ENCODE measurements at regions of chr9 and their contacts with region 1.

Region 1: GRCh38 chr9:77433675-77434445 is 214.3 kb downstream of the GNA14 start:
- DNase-seq: peak; percentile 48
- ATAC-seq: peak; percentile 95
- H3K4me3 ChIP-seq: peak overlapping the region; percentile 3 to 52 (median 10); a peak in 3 of 6 replicates
- H3K27ac ChIP-seq: no peak overlapping the region
- H3K4me1 ChIP-seq: peaks cover 21% of the 10 kb centered on the region; the same call in 1 of the 2 replicates
- H3K27me3 ChIP-seq: peaks cover 2 to 14% of the 10 kb centered on the region in 2 experiments; a peak in 4 of 5 replicates
- CTCF ChIP-seq: peak; percentile 94
- EP300 ChIP-seq: no peak
- POLR2A ChIP-seq: no peak
- RAD21 ChIP-seq: peak; percentile 68; the same call in 1 of the 2 replicates

Region 2: DNA sequence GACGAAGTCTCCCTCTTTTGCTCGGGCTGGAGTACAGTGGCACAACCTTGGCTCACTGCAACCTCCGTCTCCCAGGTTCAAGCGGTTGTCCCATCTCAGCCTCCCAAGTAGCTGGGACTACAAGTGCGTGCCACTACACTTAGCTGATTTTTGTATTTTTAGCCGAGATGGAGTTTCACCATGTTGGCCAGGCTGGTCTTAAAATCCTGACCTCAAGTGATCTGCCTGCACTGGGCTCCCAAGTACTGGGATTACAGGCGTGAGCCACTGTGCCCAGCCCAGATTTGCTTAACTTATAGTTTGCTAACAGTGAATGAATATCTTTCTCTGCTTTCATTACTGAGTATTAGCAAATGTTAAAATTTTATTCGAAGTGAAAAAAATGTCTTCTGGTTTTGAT is 172.3 kb before region 1 on chr9:
- CTCF ChIA-PET with region 1: no interaction called
- POLR2A ChIA-PET with region 1: no interaction called
- in situ Hi-C with region 1: no loop called
- intact Hi-C with region 1: no loop called
- DNase-seq: no peak
- ATAC-seq: no peak
- H3K4me3 ChIP-seq: no peak overlapping the region
- H3K27ac ChIP-seq: no peak overlapping the region
- H3K4me1 ChIP-seq: no peaks in the 10 kb centered on the region
- H3K27me3 ChIP-seq: no peaks in the 10 kb centered on the region
- CTCF ChIP-seq: no peak
- EP300 ChIP-seq: no peak
- POLR2A ChIP-seq: no peak
- RAD21 ChIP-seq: no peak

Region 3: GRCh38 chr9:77475641-77476473 is 42.0 kb after region 1 on chr9:
- CTCF ChIA-PET with region 1: no interaction called
- POLR2A ChIA-PET with region 1: no interaction called
- in situ Hi-C with region 1: no loop called
- intact Hi-C with region 1: no loop called
- DNase-seq: no peak
- ATAC-seq: no peak
- H3K4me3 ChIP-seq: no peak overlapping the region
- H3K27ac ChIP-seq: no peak overlapping the region
- H3K4me1 ChIP-seq: no peaks in the 10 kb centered on the region
- H3K27me3 ChIP-seq: no peaks in the 10 kb centered on the region
- CTCF ChIP-seq: no peak
- EP300 ChIP-seq: no peak
- POLR2A ChIP-seq: no peak
- RAD21 ChIP-seq: no peak

Region 4: DNA sequence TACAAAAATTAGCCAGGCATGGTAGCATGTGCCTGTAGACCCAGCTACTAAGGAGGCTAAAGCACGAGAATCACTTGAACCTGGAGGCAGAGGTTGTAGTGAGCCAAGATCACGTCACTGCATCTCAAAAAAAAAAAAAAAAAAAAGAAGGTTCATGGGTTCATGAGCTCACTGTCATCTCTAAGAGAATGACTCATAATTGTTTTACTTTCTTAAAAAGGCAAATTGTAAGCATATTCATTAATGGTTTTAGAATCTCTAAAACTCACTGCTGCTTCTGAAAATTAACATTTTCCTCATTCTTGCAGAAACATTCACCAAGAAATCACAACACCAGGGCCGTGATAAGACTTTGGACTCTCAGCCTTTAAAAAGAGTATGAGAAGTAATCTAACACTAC is 110.7 kb after region 1 on chr9:
- CTCF ChIA-PET with region 1: no interaction called
- POLR2A ChIA-PET with region 1: no interaction called
- in situ Hi-C with region 1: no loop called
- intact Hi-C with region 1: no loop called
- DNase-seq: no peak
- ATAC-seq: no peak
- H3K4me3 ChIP-seq: no peak overlapping the region
- H3K27ac ChIP-seq: no peak overlapping the region
- H3K4me1 ChIP-seq: no peaks in the 10 kb centered on the region
- H3K27me3 ChIP-seq: no peaks in the 10 kb centered on the region; a peak in 1 of 5 replicates
- CTCF ChIP-seq: no peak
- EP300 ChIP-seq: no peak
- POLR2A ChIP-seq: no peak
- RAD21 ChIP-seq: no peak

Region 5: DNA sequence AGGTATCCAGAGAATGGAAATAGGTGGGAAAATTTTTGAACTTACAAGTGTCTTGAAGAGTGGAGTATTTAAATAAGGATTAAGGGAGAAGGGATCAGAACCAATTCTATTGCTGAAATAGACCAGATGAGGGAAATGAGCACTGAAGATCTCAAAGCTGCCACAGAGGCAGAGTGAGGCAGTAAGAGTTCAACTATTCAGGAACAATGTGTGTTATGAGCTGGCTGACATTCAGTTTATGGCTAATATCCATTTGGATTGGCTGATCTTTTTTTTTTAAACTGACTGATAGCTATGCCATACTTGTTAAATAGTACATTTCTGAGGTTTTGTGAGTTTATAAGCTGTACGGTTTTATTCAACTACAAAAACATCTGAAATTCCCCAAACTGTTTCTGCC is 309.5 kb after region 1 on chr9:
- CTCF ChIA-PET with region 1: no interaction called
- POLR2A ChIA-PET with region 1: no interaction called
- in situ Hi-C with region 1: loop called (anchors 10 kb)
- intact Hi-C with region 1: no loop called
- DNase-seq: no peak
- ATAC-seq: no peak
- H3K4me3 ChIP-seq: no peak overlapping the region
- H3K27ac ChIP-seq: no peak overlapping the region
- H3K4me1 ChIP-seq: peaks cover 5% of the 10 kb centered on the region; the same call in 1 of the 2 replicates
- H3K27me3 ChIP-seq: no peaks in the 10 kb centered on the region
- CTCF ChIP-seq: no peak
- EP300 ChIP-seq: no peak
- POLR2A ChIP-seq: no peak
- RAD21 ChIP-seq: no peak

Region 6: DNA sequence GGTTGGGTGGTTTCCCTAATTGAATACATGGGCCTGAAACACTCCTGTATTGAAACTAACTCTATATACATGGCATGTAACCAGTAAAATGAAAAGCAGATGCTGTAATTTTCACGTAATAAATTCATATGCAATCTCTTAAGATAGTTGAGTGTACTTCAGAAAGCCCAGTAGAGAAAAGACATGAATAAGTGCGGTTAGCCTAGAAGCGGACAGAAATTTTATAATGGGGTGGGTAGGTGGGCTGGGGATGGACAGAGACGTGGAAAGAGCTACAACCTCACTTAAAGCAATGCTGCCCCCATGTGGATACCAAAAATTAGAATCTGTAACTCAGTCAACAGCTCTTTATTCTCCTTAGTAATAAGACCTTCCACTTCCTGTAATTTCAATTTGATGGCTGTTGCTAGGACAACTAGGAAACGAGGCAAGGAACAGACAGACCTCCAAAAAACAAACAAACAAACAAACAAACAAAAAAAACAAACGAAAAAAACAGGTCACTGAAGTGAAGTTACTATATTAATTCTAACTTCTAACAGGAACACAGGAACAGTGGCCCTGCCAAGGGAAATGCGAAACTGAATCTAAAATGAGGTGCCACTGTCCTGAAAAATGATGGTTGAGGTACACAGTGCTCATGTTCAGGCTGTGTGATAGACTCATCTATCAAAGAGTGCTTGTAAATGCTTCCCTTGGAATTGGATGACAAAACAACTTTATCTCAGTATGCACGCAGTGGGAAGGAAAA is 317.7 kb after region 1 on chr9:
- CTCF ChIA-PET with region 1: interaction called, 7 read pairs
- POLR2A ChIA-PET with region 1: no interaction called
- in situ Hi-C with region 1: loop called (anchors 10 kb)
- intact Hi-C with region 1: loop called (anchors 2 kb)
- DNase-seq: peak; percentile 35
- ATAC-seq: peak; percentile 79
- H3K4me3 ChIP-seq: no peak overlapping the region
- H3K27ac ChIP-seq: no peak overlapping the region
- H3K4me1 ChIP-seq: no peaks in the 10 kb centered on the region
- H3K27me3 ChIP-seq: no peaks in the 10 kb centered on the region
- CTCF ChIP-seq: peak; percentile 68
- EP300 ChIP-seq: no peak
- POLR2A ChIP-seq: no peak
- RAD21 ChIP-seq: 0 out of 2 replicates have a peak, but pooled peaks have one; percentile 27